ENCODE measurements at regions of chr1 and their contacts with region 1.

Region 1: DNA sequence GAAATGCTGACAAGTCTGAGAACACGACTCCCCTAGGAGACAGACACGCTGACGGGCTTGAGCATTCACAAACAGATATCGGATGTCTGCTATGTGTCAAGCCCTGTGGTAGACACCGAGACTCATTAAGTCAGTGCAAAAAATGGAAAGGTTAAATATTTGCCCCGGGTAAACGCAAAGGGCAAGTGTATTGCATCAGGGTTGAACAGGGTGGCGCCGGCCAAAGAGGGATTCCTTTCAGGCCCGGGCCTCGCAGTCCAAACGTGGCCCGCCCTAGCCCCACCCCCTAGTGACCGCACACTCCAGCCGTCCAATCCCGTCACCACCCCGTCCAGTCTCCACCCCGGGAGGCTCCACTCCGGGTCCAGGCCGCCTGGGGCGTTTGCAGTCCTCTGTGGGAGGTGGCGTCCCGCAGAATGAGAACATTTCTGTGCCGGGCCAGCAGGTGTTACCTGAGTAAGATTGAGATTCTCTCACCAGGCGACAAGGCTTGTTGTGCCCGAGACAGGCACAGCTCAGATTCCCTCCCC is 16.3 kb upstream of the TMEM9 start:
- DNase-seq: peak; percentile 82
- H3K4me3 ChIP-seq: peak overlapping the region; percentile 51 to 57 (median 55)
- H3K27ac ChIP-seq: no peak overlapping the region
- H3K4me1 ChIP-seq: peaks cover 9% of the 10 kb centered on the region
- H3K27me3 ChIP-seq: peaks cover 9 to 11% of the 10 kb centered on the region in 2 experiments
- CTCF ChIP-seq: no peak
- POLR2A ChIP-seq: no peak

Region 2: DNA sequence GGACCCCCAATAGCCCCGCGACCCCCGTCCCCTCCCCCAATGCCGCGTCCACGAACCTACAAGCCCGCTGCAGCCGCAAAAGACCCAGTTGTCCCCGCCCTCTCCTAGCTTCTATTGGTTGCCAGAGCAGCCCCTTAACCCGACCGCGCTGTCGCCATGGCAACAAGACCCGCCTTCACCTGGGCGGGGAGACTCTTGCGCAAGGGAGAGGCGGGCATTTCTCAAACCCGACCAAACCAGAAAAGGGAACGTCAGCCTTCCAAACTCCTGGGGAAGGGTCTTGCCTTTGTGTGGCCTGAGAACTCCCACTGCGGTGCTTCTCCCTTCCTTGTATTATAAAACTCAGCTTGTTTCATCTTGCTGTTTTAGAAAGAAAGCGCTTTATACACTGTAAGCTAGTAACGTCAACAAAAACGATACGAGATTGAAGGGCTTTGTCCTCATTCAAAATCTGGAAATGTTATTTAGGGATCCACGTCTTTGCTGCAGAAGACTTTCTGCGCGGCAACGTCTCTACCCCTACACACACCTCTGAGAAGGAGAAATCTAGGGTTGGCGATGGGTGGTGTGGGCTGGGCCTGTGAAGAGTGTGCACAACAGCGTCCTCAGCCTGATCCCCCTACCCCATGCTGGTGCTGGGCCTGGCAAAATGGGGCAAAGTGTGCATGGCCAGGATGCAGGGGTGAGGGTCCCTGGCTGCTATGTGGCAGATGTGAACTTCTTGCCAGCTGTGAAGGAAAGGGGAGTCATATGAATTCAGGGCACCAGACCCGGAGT is 16.0 kb before region 1 on chr1 and contains the start of gene TMEM9:
- CTCF ChIA-PET with region 1: interaction called, 15 read pairs
- POLR2A ChIA-PET with region 1: no interaction called
- dilution Hi-C with region 1: no loop called
- intact Hi-C with region 1: loop called (anchors 1 kb)
- DNase-seq: peak; percentile 96
- H3K4me3 ChIP-seq: peak within 1 kb of the TSS; percentile 42 to 56 (median 54)
- H3K27ac ChIP-seq: no peak within 1 kb of the TSS
- H3K4me1 ChIP-seq: peaks cover 8% of the 10 kb centered on the region
- H3K27me3 ChIP-seq: peaks cover 19 to 23% of the 10 kb centered on the region in 2 experiments
- CTCF ChIP-seq: no peak
- POLR2A ChIP-seq: no peak
- total RNA-seq, gene TMEM9: 39.3 and 44.6 TPM in 2 replicates

Region 3: DNA sequence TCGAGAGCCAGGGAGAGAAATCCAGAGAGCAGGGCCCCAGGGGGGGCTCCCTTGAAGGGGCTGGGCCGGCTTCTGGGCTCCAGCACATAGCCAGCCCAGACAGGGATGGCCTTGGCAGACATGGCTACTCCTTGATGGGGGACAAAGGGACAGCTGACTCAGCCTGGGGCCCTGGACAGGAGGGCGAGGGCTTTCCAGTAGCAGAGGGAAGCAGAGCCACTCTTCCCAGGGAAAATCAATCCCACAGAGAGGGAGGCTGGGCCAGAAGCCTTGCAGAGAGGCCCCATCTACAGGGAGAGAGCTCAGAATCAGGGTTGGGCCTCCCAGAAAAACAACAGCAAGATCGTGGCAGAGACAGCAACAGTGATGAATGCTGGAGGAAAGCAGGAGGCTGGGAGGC is 35.6 kb after region 1 on chr1:
- CTCF ChIA-PET with region 1: no interaction called
- POLR2A ChIA-PET with region 1: no interaction called
- dilution Hi-C with region 1: no loop called
- intact Hi-C with region 1: no loop called
- DNase-seq: no peak
- H3K4me3 ChIP-seq: no peak overlapping the region
- H3K27ac ChIP-seq: no peak overlapping the region
- H3K4me1 ChIP-seq: no peaks in the 10 kb centered on the region
- H3K27me3 ChIP-seq: peaks cover 2 to 9% of the 10 kb centered on the region in 2 experiments
- CTCF ChIP-seq: no peak
- POLR2A ChIP-seq: no peak